ENCODE measurements at regions of chr11 and their contacts with region 1.

Region 1: GRCh38 chr11:70191495-70192140 is 11.5 kb upstream of the FADD start:
- DNase-seq: peak; percentile 54
- H3K4me3 Mint-ChIP-seq: no peak overlapping the region
- H3K27ac Mint-ChIP-seq: no peak overlapping the region
- H3K4me1 Mint-ChIP-seq: peaks cover 3% of the 10 kb centered on the region
- H3K27me3 Mint-ChIP-seq: no peaks in the 10 kb centered on the region

Region 2: GRCh38 chr11:69918938-69919650 is 272.5 kb before region 1 on chr11:
- intact Hi-C with region 1: loop called (anchors 1 kb)
- DNase-seq: peak; percentile 62
- H3K4me3 Mint-ChIP-seq: no peak overlapping the region
- H3K27ac Mint-ChIP-seq: no peak overlapping the region
- H3K4me1 Mint-ChIP-seq: peaks cover 4% of the 10 kb centered on the region
- H3K27me3 Mint-ChIP-seq: peaks cover 14% of the 10 kb centered on the region

Region 3: GRCh38 chr11:69950120-69950519 is 241.5 kb before region 1 on chr11:
- intact Hi-C with region 1: loop called (anchors 1 kb)
- DNase-seq: no peak
- H3K4me3 Mint-ChIP-seq: no peak overlapping the region
- H3K27ac Mint-ChIP-seq: no peak overlapping the region
- H3K4me1 Mint-ChIP-seq: no peaks in the 10 kb centered on the region
- H3K27me3 Mint-ChIP-seq: no peaks in the 10 kb centered on the region

Region 4: DNA sequence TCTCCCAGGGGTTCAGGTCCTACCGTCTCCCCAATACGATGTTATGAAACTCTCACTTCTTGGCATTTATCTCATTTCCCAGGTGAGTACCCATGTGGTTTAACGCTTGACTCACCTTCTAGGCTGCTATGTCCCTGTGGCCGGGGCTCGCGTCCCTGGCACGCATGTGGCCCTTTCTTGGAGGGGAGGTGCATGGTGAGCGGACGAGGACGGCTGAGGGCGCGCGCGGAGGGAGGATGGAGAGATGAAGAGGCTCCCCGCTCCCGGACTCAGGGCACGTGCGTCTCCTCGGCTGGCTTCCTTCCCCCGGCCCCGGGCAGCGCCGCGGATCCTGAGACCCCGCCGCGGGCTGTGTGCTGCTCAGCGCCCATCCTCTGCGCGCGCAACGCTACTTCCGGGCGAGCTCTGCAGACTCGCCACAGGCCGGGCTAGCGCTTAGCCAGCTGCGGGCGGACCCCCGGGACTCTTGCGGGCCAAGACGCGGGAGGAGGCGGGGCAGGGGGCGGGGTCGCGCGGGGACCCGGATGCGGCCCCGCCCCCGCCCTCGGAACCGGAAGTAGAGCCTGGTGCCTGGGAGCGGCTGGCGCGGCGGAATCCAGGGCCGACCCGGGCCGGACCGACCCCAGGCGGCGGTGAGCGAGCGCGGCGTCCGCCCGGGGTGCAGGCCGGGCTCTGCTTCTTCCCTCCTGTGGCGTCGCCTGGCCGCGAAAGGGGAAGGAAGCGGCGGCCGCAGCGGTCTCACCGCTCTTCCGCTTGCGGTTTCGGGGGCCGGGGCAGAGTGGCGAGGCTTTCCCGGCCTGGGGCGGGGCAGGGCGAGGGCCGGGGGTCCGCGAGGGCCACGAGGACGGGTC is 206.6 kb after region 1 on chr11 and contains the start of gene CTTN:
- intact Hi-C with region 1: no loop called
- DNase-seq: peak; percentile 54
- H3K4me3 Mint-ChIP-seq: peak within 1 kb of the TSS; percentile 83
- H3K27ac Mint-ChIP-seq: peak within 1 kb of the TSS; percentile 54
- H3K4me1 Mint-ChIP-seq: peaks cover 28% of the 10 kb centered on the region
- H3K27me3 Mint-ChIP-seq: peaks cover 51% of the 10 kb centered on the region
- total RNA-seq, gene CTTN: 33.4 and 34.9 TPM in 2 replicates

Measured in activated T-helper 2 cell treated with anti-CD3 and anti-CD28 coated beads, Interferon-gamma antibody, Interleukin-2, Interleukin-4, amounts not matched to agents 10 μg/mL and 5 μg/mL and 100 μg/mL, durations not matched to agents 14 hours and 24 hours and 36 hours (primary cell).